AG04450 (cell line): ENCODE measurements at regions of chr2 and their contacts with region 1.

Region 1: DNA sequence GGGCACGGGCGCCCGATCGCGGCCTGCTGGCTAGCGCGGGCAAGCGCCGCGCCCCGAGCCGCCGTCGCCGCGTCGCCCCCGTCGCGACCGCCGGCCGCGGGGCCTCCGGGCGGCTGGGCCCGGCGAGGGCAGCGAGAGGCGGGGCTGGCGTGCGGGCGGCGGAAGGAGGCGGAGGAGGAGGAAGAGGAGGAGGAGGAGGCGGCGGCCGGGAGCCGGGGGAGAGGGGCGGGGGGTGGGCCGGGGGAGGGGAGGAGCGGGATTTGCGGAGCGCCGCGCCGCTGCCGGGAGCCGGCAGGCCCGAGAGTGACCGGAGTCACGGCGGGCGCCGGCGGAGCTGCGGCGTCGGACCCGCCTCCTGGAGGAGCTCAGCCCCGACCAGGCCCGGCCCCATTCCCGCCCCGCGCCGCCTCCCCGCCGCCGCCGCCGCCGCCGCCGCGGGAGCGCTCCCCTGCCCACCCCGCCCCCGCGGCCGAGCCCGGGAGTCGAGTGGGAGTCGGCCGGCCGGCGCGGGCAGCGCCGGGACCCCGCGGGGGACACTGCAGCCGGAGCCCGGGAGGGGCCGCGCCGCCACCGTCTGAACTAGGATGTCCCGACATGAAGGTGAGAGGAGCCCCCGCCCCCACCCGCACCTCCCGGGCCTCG is at the start of gene KCMF1:
- DNase-seq: no peak
- H3K4me3 ChIP-seq: peak within 1 kb of the TSS; percentile 74
- H3K27ac ChIP-seq: peak within 1 kb of the TSS; percentile 89
- H3K27me3 ChIP-seq: no peaks in the 10 kb centered on the region
- CTCF ChIP-seq: no peak
- polyA plus RNA-seq, gene KCMF1: 90.9 and 121 TPM in 2 replicates

Region 2: DNA sequence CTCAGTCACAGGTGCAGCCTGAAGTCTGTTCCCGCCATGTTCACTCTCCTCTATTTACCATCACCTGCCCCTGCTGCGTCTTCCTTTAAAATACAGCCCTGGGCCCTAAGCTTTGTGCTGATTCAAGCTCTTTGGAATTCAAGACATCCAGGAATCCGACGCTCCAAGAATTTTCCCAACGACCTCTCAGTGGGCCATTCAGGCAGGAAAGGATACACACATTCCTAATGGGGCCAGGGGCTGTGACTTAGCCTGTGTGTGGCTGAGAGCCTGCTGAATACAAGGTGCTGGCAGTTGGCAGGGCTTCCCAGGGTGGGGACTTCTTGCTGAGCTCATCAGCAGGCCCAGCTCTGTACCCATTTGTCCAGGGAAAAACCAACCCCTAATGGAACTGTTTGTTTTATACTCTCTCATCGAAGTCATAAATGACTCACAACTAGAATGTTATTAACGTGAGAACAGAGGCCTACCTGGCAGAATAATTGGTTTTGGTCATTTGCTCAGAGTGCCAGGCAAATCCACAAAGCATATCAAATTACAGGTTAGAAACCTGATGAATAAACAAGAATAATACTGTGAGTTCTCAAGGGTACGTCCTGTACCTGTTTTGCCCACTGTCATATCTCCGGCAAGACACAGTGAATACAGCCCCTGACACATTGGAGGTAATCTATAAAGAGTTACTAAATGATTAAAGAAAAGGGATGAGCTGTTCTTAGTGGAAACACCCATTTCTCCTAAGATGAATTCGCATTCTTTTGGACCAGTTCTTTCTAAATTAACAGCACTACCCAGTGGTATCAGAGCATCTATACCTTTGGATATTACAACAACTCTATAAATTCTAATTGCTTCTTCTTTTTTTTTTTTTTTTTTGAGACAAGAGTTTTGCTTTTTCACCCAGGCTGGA is 12.6 kb before region 1 on chr2:
- CTCF ChIA-PET with region 1: no interaction called
- POLR2A ChIA-PET with region 1: interaction called, 11 read pairs
- DNase-seq: peak; percentile 70
- H3K4me3 ChIP-seq: no peak overlapping the region
- H3K27ac ChIP-seq: peak overlapping the region; percentile 95
- H3K27me3 ChIP-seq: no peaks in the 10 kb centered on the region
- CTCF ChIP-seq: no peak

Region 3: GRCh38 chr2:85053802-85054201 is 82.8 kb after region 1 on chr2:
- CTCF ChIA-PET with region 1: no interaction called
- POLR2A ChIA-PET with region 1: interaction called, 10 read pairs
- DNase-seq: no peak
- H3K4me3 ChIP-seq: no peak overlapping the region
- H3K27ac ChIP-seq: no peak overlapping the region
- H3K27me3 ChIP-seq: no peaks in the 10 kb centered on the region
- CTCF ChIP-seq: no peak